Endothelial cell of umbilical vein (primary cell): ENCODE measurements at regions of chr10 and their contacts with region 1.

Region 1: GRCh38 chr10:127254276-127254675 is 57.9 kb upstream of the INSYN2A start:
- DNase-seq: peak; percentile 33
- H3K4me3 ChIP-seq: no peak overlapping the region
- H3K27ac ChIP-seq: no peak overlapping the region
- H3K4me1 ChIP-seq: peaks cover 8% of the 10 kb centered on the region
- H3K27me3 ChIP-seq: no peaks in the 10 kb centered on the region
- CTCF ChIP-seq: no peak
- POLR2A ChIP-seq: no peak

Region 2: DNA sequence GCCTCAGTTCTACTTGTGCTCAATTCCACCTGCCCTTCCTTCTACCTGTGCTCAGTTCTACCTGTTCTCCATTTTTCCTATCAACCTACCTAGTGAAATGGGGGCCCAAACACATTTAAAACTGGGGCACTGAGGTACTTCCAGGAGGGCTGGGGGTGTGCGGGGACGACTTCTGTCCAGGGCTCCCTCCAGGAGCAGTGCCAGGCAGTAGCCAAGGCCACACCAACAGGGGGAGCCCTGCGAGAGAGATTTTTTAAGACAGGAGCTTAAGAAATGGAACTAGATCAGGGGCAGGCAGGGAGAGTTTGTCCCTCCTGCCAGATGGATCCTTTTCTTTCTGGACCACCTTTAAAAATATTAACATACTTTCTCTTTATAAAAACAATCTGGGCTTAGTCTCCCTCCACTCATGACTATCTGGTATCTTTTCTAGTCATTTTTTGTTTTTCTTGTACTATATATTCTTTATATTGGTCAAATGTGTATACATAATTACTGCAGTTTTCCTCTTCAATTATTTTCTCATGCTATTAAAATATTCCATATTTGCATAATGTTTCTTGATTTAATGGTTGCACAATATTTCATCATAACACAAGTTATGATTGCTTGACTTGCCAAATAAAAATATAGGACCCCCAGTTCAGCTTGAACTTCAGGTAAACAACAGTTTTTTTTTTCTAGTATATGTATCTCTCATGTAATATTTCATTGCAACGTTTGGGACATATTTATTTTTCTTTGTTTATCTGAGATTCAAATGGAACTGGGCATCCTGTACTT is 10.6 kb before region 1 on chr10:
- CTCF ChIA-PET with region 1: interaction called, 20 read pairs
- POLR2A ChIA-PET with region 1: no interaction called
- dilution Hi-C with region 1: no loop called
- intact Hi-C with region 1: no loop called
- DNase-seq: peak; percentile 58
- H3K4me3 ChIP-seq: no peak overlapping the region
- H3K27ac ChIP-seq: no peak overlapping the region
- H3K4me1 ChIP-seq: no peaks in the 10 kb centered on the region
- H3K27me3 ChIP-seq: no peaks in the 10 kb centered on the region
- CTCF ChIP-seq: peak; percentile 67 to 77
- POLR2A ChIP-seq: no peak

Region 3: DNA sequence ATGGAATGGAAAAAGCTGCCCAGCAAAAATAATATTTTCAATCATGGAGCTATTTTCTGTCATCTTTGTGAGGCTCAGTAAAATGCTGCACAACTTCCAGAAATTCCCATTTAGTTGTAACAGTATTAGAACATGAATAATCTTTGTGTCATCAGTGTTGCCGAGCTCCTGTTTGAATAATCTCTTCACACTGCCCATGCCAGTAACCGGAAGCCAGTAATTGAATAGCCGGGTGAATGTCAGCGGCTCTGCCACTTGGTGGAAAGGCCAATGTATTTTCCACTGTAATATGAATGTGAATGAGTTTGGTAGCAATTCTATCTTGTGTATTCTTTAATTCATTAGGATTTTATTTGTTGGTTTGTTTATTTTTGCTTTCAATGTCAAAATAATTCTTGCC is 114.7 kb after region 1 on chr10:
- CTCF ChIA-PET with region 1: no interaction called
- POLR2A ChIA-PET with region 1: no interaction called
- dilution Hi-C with region 1: no loop called
- intact Hi-C with region 1: no loop called
- DNase-seq: no peak
- H3K4me3 ChIP-seq: no peak overlapping the region
- H3K27ac ChIP-seq: no peak overlapping the region
- H3K4me1 ChIP-seq: no peaks in the 10 kb centered on the region
- H3K27me3 ChIP-seq: no peaks in the 10 kb centered on the region
- CTCF ChIP-seq: no peak
- POLR2A ChIP-seq: no peak